Tibial artery (tissue), 4 donors: ENCODE measurements at regions of chr1 and their contacts with region 1.

Region 1: DNA sequence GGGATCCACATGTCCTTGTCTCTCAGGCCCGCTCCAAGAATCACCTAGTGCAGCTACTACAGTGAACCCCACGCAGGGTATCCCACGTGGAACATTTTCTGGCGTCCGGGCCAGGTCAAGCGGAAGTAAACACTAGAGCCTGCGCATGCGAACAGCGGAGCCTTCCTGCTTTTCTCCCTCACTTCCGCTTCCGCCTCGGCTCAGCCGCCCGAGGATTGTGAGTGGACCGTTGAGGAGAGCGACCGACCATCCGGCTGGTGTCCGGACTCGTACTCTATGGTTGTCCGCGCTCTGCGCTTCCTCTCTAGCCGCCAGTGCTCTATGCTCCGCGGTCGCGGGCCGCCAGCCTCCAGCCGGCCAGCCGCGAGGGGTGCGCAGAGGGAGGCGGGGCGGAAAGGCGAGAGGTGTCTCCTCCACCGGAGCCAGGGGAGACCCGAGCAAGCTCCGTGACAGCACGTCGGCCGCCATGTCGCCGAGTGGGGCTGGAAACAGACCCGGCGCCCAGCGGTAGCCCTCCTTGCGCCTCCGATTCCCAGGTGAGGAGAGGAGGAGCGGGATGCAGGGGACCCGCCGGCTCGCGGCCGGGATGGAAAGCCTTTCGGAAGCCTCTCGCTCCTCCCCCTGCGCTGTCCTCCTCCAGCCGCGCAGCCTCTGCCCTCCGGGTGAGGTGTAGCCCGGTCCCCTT is at the starts of genes CNST and TFB2M:
- DNase-seq: peak; percentile 98 to 99
- H3K4me3 ChIP-seq: peak within 1 kb of the TSS; percentile 91 to 94
- H3K27ac ChIP-seq: peak within 1 kb of the TSS; percentile 94 to 96
- H3K4me1 ChIP-seq: peaks cover 0 to 50% (median 31%) of the 10 kb centered on the region in 4 donors
- H3K27me3 ChIP-seq: no peaks in the 10 kb centered on the region
- CTCF ChIP-seq: peak in 1 of 2 experiments; percentile 15

Region 2: GRCh38 chr1:246506674-246507481 is 59.4 kb before region 1 on chr1 and contains the start of gene SMYD3:
- intact Hi-C with region 1: loop called (anchors 10 kb)
- DNase-seq: peak in 1 of 2 donors; percentile 45
- H3K4me3 ChIP-seq: peak within 1 kb of the TSS; percentile 91 to 95
- H3K27ac ChIP-seq: peak within 1 kb of the TSS; percentile 59 to 71
- H3K4me1 ChIP-seq: peaks cover 0 to 13% (median 9%) of the 10 kb centered on the region in 4 donors
- H3K27me3 ChIP-seq: no peaks in the 10 kb centered on the region
- CTCF ChIP-seq: peak in 1 of 2 experiments; percentile 4

Region 3: GRCh38 chr1:246641394-246641793 is 75.1 kb after region 1 on chr1:
- intact Hi-C with region 1: loop called (anchors 5 kb)
- DNase-seq: no peak
- H3K4me3 ChIP-seq: no peak overlapping the region
- H3K27ac ChIP-seq: peak overlapping the region; percentile 36 to 57
- H3K4me1 ChIP-seq: peaks cover 0 to 41% (median 12%) of the 10 kb centered on the region in 4 donors
- H3K27me3 ChIP-seq: no peaks in the 10 kb centered on the region
- CTCF ChIP-seq: no peak